Dorsolateral prefrontal cortex (tissue), 120 donors: ENCODE measurements at regions of chr1 and their contacts with region 1.

Region 1: GRCh38 chr1:62746085-62746808 is 37.7 kb upstream of the ATG4C start:
- DNase-seq: no peak
- H3K4me3 ChIP-seq: peak overlapping the region in 33 of 59 donors; percentile 4 to 59 (median 27)
- H3K27ac ChIP-seq: no peak overlapping the region
- H3K27me3 ChIP-seq: no peaks in the 10 kb centered on the region
- CTCF ChIP-seq: peak; percentile 54 to 93 (median 76)

Region 2: DNA sequence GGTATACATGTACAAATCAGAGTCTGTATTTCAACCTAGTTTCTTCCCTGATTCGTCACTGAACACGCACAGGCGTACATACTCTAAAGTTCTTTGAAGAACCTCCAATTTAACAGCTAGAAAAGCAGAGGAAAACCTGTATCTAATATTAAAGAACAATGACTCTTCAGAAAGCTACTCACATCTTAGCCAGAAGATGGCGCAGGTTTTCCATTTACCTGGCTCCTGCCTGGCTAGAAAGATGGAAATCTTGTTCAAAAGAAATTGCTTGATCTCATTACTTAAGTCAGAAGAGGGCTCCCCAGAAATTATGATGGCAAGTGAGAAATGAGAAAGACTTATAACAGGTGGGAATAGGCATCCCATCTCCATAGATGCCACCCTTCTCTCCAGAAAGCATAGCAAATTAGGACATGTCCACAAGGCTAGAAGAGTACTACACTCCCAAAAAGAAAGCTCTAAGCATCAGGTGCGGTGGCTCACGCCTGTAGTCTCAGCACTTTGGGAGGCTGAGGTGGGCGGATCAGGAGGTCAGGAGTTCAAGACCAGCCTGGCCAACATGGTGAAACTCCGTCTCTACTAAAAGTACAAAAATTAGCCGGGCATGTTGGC is 570.6 kb before region 1 on chr1:
- intact Hi-C with region 1: loop called in 1 of 2 experiments (anchors 10 kb)
- DNase-seq: peak in 4 of 10 donors; percentile 15 to 52 (median 39)
- H3K4me3 ChIP-seq: no peak overlapping the region
- H3K27ac ChIP-seq: no peak overlapping the region
- H3K27me3 ChIP-seq: peaks cover 0 to 6% (median 0%) of the 10 kb centered on the region in 45 donors
- CTCF ChIP-seq: peak; percentile 64 to 96 (median 82)

Region 3: DNA sequence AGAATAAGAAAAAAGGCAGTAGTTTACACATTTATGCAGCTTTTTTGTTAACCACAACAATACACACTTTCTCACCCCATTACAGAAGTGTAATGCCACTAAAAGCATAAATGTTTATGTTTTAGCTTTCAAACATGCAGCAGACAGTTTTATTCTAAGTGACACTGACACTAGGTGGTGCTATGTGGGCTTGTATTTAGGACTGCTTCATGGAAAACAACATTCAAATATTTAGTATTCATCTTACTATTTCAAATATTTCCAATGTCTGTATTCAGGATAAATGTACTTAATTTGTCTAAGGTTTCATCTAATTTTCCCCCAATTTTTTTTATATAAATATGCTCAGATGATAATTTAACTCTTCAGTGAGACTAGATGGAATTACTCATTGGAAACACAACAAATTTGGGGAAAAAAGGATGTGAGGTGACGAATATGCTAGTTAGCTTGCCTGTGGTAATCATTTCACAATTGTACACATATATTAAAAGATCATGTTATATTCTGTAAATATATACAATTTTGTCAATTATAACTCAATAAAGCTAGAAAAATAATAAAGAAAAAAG is 238.0 kb before region 1 on chr1:
- intact Hi-C with region 1: loop called (anchors 5 kb)
- DNase-seq: no peak
- H3K4me3 ChIP-seq: no peak overlapping the region
- H3K27ac ChIP-seq: no peak overlapping the region
- H3K27me3 ChIP-seq: no peaks in the 10 kb centered on the region
- CTCF ChIP-seq: peak; percentile 34 to 82 (median 65)

Region 4: GRCh38 chr1:62514746-62515423 is 231.4 kb before region 1 on chr1:
- intact Hi-C with region 1: loop called in 1 of 2 experiments (anchors 5 kb)
- DNase-seq: no peak
- H3K4me3 ChIP-seq: no peak overlapping the region
- H3K27ac ChIP-seq: no peak overlapping the region
- H3K27me3 ChIP-seq: no peaks in the 10 kb centered on the region
- CTCF ChIP-seq: no peak

Region 5: GRCh38 chr1:62530516-62531154 is 215.6 kb before region 1 on chr1:
- intact Hi-C with region 1: loop called (anchors 2 to 10 kb)
- DNase-seq: peak; percentile 40 to 70 (median 63)
- H3K4me3 ChIP-seq: no peak overlapping the region
- H3K27ac ChIP-seq: no peak overlapping the region
- H3K27me3 ChIP-seq: no peaks in the 10 kb centered on the region
- CTCF ChIP-seq: peak in 54 of 56 donors; percentile 32 to 82 (median 60)

Region 6: GRCh38 chr1:62849032-62849431 is 102.8 kb after region 1 on chr1:
- intact Hi-C with region 1: no loop called
- DNase-seq: no peak
- H3K4me3 ChIP-seq: no peak overlapping the region
- H3K27ac ChIP-seq: no peak overlapping the region
- H3K27me3 ChIP-seq: no peaks in the 10 kb centered on the region
- CTCF ChIP-seq: peak in 3 of 56 donors; percentile 10 to 19 (median 11)